Ascending aorta (tissue), 2 donors: ENCODE measurements at regions of chr1 and their contacts with region 1.

Region 1: GRCh38 chr1:29202584-29203340 is 21.1 kb upstream of the SRSF4 start:
- DNase-seq: peak; percentile 81 to 98
- H3K4me3 ChIP-seq: no peak overlapping the region
- H3K27ac ChIP-seq: peak overlapping the region; percentile 90 to 91
- H3K4me1 ChIP-seq: peaks cover 0 to 7% of the 10 kb centered on the region in 2 donors
- H3K27me3 ChIP-seq: no peaks in the 10 kb centered on the region
- CTCF ChIP-seq: peak; percentile 86 to 94 (median 89)

Region 2: DNA sequence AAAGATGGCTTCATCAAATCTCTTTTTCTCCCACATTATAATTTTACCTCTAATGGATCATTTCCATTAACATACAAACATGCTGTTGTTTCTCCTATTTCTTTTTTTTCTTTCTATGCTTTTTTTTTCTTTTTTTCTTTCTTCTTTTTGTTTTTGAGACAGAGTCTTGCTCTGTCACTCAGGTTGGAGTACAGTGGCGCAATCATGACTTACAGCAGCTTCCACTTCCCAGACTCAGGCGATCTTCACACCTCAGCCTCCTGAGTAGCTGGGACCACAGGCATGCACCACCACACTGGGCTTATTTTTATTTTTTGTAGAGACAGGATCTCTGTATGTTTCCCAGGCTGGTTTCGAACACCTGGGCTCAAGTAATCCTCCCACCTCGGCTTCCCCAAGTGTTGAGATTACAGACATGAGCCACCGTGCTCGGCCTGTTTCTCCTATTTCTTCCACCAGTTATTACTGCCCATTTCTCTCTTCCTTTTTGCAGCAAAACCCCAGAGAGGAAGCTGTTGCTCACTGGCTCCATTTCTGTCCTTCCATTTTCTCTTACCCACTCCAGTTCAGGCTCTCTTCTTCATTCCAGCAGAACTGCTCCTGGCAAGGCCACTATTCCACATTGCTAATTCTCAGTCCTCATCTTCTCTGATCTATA is 422.9 kb before region 1 on chr1:
- intact Hi-C with region 1: loop called (anchors 2 kb)
- DNase-seq: no peak
- H3K4me3 ChIP-seq: no peak overlapping the region
- H3K27ac ChIP-seq: no peak overlapping the region
- H3K4me1 ChIP-seq: peaks cover 0 to 5% of the 10 kb centered on the region in 2 donors
- H3K27me3 ChIP-seq: no peaks in the 10 kb centered on the region
- CTCF ChIP-seq: no peak

Region 3: DNA sequence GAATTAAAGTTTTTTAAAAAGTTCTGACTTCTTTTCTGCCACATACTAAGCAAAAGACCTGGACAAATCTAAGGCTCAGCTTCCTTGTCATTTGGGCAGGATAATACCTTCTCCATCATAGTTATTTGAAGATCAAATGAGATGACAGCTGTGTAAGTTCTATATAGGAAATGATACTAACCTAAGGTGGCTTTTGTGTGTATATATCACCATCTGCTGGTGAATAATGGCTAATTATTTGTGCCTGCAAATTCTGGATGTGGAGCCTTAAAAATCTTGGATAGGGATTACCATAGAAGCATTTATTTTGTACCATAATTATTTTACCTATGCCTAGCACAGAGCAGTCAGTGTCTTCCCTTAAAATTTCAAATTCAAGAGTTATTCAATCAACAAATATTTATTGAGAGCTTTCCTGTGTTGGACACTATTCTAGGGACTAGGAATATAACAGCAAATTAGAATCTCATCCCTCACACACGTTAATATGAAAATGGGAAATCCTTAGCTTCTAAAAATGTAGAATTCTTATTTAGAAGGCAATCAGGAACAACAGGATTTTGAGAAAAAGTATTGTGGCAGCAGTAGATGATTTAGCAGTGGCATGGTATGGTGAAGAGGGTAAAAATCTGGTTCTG is 168.8 kb before region 1 on chr1:
- intact Hi-C with region 1: loop called (anchors 5 kb)
- DNase-seq: no peak
- H3K4me3 ChIP-seq: no peak overlapping the region
- H3K27ac ChIP-seq: no peak overlapping the region
- H3K4me1 ChIP-seq: no peaks in the 10 kb centered on the region
- H3K27me3 ChIP-seq: no peaks in the 10 kb centered on the region
- CTCF ChIP-seq: peak; percentile 45 to 65 (median 49)

Region 4: DNA sequence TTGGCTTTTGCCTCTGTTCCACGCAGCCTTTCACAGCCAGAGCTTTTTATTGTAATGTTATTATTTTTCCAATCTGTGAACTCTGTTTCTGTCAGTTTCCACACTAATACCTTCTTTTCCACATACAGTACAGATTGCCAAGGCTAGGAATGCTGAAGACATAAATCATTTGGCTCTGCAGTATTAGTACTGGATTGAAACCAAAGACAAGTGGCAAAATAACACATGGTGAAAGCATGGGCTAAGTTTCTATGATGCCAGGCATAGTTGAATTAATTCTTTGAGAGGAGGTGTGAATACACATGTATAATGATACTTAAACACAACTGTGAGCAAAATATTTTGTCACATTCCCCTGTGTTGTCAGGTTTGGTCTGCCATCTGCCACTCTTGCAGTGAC is 152.6 kb before region 1 on chr1:
- intact Hi-C with region 1: loop called (anchors 5 kb)
- DNase-seq: no peak
- H3K4me3 ChIP-seq: no peak overlapping the region
- H3K27ac ChIP-seq: peak overlapping the region in 1 of 2 donors; percentile 19
- H3K4me1 ChIP-seq: peaks cover 0 to 30% of the 10 kb centered on the region in 2 donors
- H3K27me3 ChIP-seq: no peaks in the 10 kb centered on the region
- CTCF ChIP-seq: no peak

Region 5: DNA sequence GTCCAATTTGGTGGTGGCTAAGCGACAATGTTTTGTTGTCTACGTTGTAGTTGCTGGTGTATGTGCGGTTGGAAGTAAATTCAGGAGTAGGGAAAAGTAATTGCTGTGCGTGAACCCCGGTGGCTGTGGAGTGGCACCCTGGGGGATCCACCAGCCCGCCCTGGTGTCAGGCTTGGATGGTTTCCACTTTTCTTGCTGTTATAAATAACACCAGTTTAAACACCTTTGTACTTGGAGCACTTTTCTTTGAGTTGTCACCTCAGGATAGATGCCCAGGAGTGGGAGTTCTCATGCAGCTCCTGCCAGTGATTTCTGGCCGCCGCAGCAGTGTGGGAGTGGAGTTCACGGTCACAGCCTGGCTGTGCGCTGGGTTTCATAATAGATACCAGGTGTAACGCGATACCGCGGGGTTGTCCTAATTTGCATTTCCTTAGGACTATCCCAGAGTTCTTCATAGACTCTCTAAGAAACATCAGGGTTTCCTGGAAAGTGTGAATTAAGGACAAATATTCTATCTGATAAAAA is 66.3 kb before region 1 on chr1:
- intact Hi-C with region 1: no loop called
- DNase-seq: no peak
- H3K4me3 ChIP-seq: no peak overlapping the region
- H3K27ac ChIP-seq: no peak overlapping the region
- H3K4me1 ChIP-seq: no peaks in the 10 kb centered on the region
- H3K27me3 ChIP-seq: no peaks in the 10 kb centered on the region
- CTCF ChIP-seq: no peak

Region 6: DNA sequence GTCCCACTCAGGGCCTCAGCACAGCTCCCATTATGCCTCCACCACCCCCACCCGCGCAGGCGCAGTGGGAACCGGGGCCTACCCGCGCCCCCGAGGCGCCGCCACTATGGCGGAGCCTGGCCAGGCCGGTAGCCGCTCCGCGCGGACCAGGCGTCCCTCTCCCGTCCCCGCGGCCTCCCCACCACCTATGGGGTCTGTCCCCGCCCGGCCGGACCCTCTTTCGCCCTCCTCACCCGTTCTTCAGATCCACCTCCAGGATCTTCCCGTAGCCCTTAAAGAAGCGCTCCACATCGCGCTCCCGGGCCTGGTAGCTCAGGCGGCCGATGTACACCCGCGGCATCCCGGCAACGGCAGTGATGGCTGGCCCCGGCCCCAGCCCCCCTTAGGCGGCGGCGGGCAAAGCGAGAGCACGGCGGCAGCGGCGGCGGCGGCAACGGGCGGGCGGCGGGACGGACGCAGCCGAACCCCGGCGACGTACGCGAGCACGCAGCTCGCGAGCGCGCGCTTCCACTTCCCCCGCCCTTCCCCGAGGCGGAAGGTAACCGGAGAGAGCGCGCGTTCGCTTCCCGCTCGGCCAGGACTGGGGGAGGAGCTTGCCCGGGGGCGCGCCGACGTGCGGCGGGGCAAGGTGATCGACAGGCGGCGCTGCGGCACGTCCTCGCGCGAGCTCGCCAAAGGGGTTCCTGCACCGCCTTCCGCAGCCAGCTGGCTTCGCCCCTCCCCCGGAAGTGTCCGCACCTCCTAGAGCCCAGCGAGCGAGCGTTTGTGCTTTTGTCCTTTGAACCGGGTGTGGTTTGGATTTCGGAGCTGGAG is 21.1 kb before region 1 on chr1 and contains the start of gene SRSF4:
- intact Hi-C with region 1: loop called (anchors 1 kb)
- DNase-seq: peak; percentile 92 to 99
- H3K4me3 ChIP-seq: peak within 1 kb of the TSS; percentile 95 to 99
- H3K27ac ChIP-seq: peak within 1 kb of the TSS; percentile 100
- H3K4me1 ChIP-seq: peaks cover 18 to 30% of the 10 kb centered on the region in 2 donors
- H3K27me3 ChIP-seq: no peaks in the 10 kb centered on the region
- CTCF ChIP-seq: peak; percentile 73 to 79 (median 75)
- total RNA-seq, gene SRSF4: 49.1 TPM

Region 7: GRCh38 chr1:29245876-29246275 is 43.1 kb after region 1 on chr1:
- intact Hi-C with region 1: no loop called
- DNase-seq: no peak
- H3K4me3 ChIP-seq: no peak overlapping the region
- H3K27ac ChIP-seq: no peak overlapping the region
- H3K4me1 ChIP-seq: no peaks in the 10 kb centered on the region
- H3K27me3 ChIP-seq: no peaks in the 10 kb centered on the region
- CTCF ChIP-seq: peak in 1 of 3 experiments; percentile 12

Region 8: DNA sequence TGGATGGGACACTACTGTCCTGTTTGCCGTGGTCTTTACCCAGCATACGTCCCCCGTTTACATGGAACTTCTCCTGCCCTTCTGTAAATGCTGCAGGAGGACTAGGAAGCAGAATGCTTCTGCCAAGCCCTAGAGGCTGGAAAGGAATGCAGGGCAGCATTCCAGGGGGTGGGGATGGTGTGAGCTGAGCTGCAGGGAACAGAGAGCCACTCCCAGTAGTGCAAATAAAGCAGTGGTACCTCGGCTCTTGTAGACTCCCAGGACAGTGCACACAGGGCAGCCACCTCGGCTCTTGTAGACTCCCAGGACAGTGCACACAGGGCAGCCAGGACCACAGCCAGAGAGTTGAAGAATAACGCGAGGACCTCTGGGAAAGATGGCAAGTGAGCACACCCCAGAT is 69.0 kb after region 1 on chr1:
- intact Hi-C with region 1: no loop called
- DNase-seq: no peak
- H3K4me3 ChIP-seq: no peak overlapping the region
- H3K27ac ChIP-seq: no peak overlapping the region
- H3K4me1 ChIP-seq: peaks cover 0 to 10% of the 10 kb centered on the region in 2 donors
- H3K27me3 ChIP-seq: no peaks in the 10 kb centered on the region
- CTCF ChIP-seq: no peak